Body of pancreas (tissue), 4 donors: ENCODE measurements at regions of chr2 and their contacts with region 1.

Region 1: DNA sequence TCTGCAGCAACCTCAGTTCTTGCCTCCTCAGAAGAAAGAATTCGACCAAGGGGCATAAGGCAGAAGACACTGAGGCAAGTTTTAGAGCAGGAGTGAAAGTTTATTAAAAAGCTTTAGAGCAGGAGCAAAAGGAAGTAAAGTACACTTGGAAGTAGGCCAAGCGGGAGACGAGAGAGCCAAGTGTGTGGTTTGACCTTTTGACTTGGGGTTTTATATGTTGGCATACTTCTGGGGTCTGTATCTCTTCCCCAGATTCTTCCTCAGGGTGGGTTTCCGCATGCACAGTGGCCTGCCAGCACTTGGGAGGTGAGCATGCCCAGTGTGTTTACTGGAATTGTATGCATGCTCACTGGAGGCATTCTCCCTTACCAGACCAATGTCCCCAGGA is 59.3 kb upstream of the ANKRD44 start:
- DNase-seq: no peak
- ATAC-seq: no peak
- H3K4me3 ChIP-seq: no peak overlapping the region
- H3K27ac ChIP-seq: no peak overlapping the region
- H3K4me1 ChIP-seq: no peaks in the 10 kb centered on the region
- H3K27me3 ChIP-seq: no peaks in the 10 kb centered on the region
- CTCF ChIP-seq: no peak
- POLR2A ChIP-seq: no peak

Region 2: DNA sequence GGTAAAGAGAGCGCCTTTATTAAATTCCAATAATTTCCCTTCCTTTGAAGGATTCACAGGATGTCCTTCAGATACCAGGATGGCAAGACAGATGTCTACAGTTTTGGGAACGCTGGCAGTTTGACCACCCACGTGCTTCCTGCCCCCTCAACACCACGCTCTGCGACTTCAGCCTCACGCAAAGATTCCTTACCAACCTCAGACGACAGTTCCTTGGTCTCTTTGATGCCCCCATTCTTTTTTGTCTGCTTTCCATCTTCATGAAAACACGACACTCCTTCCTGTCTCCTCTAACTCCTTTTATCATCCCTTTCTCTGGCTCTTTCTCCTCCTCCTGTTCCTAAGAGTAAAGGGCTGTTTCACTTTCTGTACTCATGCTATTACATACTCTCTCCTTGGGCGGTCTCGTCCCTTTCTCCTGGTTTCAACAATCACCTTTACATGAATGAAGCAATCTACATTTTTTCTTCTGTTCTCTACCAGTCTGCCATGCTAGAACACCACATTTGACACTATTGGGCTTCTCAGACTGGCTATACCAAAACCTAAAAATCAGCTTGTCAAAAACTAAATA is 253.5 kb before region 1 on chr2:
- intact Hi-C with region 1: loop called (anchors 5 kb)
- DNase-seq: no peak
- ATAC-seq: no peak
- H3K4me3 ChIP-seq: no peak overlapping the region
- H3K27ac ChIP-seq: no peak overlapping the region
- H3K4me1 ChIP-seq: no peaks in the 10 kb centered on the region
- H3K27me3 ChIP-seq: no peaks in the 10 kb centered on the region
- CTCF ChIP-seq: no peak
- POLR2A ChIP-seq: no peak